ENCODE measurements at regions of chr2 and their contacts with region 1.

Region 1: DNA sequence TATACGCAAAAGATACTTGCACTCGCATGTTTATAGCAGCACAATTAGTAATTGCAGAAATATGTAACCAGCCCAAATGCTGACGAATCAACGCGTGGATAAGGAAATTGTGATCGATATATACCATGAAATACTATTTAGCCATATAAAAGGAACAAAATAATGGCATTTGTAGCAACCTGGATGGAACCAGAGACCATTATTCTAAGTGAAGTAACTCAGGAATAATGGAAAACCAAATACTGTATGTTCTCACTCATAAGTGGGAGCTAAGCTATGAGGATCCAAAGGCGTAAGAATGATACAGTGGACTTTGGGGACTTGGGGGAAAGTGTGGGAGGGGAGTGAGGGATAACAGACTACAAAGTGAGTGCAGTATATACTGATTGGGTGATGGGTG is 1008.0 kb upstream of the CRIM1 start:
- DNase-seq: no peak
- ATAC-seq: no peak
- H3K4me3 ChIP-seq: no peak overlapping the region
- H3K27ac ChIP-seq: no peak overlapping the region
- H3K4me1 ChIP-seq: no peaks in the 10 kb centered on the region
- H3K27me3 ChIP-seq: no peaks in the 10 kb centered on the region
- CTCF ChIP-seq: no peak

Region 2: GRCh38 chr2:35220471-35220870 is 127.1 kb before region 1 on chr2:
- CTCF ChIA-PET with region 1: no interaction called
- POLR2A ChIA-PET with region 1: no interaction called
- in situ Hi-C with region 1: no loop called
- intact Hi-C with region 1: no loop called
- DNase-seq: no peak
- ATAC-seq: no peak
- H3K4me3 ChIP-seq: no peak overlapping the region
- H3K27ac ChIP-seq: no peak overlapping the region
- H3K4me1 ChIP-seq: no peaks in the 10 kb centered on the region
- H3K27me3 ChIP-seq: no peaks in the 10 kb centered on the region
- CTCF ChIP-seq: no peak

Region 3: GRCh38 chr2:35365859-35366258 is 18.3 kb after region 1 on chr2:
- CTCF ChIA-PET with region 1: no interaction called
- POLR2A ChIA-PET with region 1: interaction called, 13 read pairs
- in situ Hi-C with region 1: no loop called
- intact Hi-C with region 1: no loop called
- DNase-seq: no peak
- ATAC-seq: no peak
- H3K4me3 ChIP-seq: no peak overlapping the region
- H3K27ac ChIP-seq: no peak overlapping the region
- H3K4me1 ChIP-seq: no peaks in the 10 kb centered on the region
- H3K27me3 ChIP-seq: no peaks in the 10 kb centered on the region
- CTCF ChIP-seq: no peak

Region 4: DNA sequence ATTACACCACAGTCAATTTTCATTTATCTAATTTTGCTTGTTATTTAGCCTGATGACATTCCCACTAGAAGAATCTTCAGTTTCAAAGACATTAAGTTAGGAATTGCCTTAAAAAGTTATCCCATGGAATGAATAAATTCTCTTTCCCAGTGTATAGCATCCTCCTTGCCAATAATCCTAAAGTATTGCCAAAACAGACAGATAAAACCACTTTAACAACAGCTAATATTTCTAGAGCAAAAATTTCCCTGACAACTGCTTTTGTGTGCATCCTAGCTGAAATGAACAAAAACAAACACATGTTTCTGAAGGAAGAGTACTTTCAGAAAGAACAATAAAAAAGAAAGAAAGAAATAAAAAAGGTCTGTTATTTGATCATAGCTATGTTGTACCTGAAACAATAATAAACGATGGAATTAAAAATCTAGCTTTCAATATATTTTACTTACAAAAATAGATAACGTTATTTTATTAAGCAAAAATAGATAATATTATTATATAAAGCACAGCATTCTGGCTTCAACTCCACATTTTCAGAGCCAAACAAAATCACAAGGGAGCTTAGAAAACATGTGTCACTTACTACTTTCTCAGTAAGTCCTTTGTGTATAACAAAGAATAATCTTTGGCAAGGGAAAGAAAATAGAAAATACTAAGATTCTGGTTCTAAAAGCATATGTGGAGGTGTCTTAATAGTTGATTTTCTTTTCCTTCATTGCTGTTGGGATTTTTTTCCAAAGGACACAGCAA is 69.0 kb after region 1 on chr2:
- CTCF ChIA-PET with region 1: no interaction called
- POLR2A ChIA-PET with region 1: no interaction called
- in situ Hi-C with region 1: no loop called
- intact Hi-C with region 1: no loop called
- DNase-seq: no peak
- ATAC-seq: no peak
- H3K4me3 ChIP-seq: no peak overlapping the region
- H3K27ac ChIP-seq: no peak overlapping the region
- H3K4me1 ChIP-seq: no peaks in the 10 kb centered on the region
- H3K27me3 ChIP-seq: no peaks in the 10 kb centered on the region
- CTCF ChIP-seq: no peak

Region 5: DNA sequence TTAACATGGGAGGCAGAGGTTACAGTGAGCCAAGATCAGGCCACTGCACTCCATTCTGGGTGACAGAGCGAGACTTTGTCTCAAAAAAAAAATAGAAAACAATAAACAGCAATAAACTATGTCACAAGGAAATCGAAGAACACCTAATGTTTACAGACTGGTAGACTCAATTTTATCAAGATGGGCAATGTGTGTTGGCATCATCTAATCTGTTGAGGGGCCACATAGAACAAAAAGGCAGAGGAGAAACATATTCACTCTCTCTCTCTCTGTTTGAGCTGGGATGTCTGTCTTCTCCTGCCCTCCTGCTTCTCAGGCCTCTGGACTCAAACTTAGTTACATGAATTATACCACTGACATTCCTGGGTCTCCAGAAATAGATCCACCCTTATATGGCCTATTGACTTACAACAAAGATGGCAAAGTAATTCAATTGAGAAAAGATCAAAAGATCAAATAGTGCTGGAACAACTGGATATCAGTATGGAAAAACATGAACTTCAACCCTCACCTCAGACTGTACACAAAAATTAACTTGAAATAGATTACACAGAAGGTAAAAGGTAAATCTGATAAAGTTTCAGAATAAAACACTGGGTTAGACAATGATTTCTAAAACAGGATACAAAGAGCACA is 304.2 kb after region 1 on chr2:
- CTCF ChIA-PET with region 1: no interaction called
- POLR2A ChIA-PET with region 1: no interaction called
- in situ Hi-C with region 1: no loop called
- intact Hi-C with region 1: no loop called
- DNase-seq: no peak
- ATAC-seq: no peak
- H3K4me3 ChIP-seq: no peak overlapping the region
- H3K27ac ChIP-seq: no peak overlapping the region
- H3K4me1 ChIP-seq: no peaks in the 10 kb centered on the region
- H3K27me3 ChIP-seq: no peaks in the 10 kb centered on the region
- CTCF ChIP-seq: no peak

Measured in Panc1 (cell line).